Activated CD4-positive, alpha-beta T cell treated with anti-CD3 and anti-CD28 coated beads for 36 hours (primary cell): ENCODE measurements at regions of chr9 and their contacts with region 1.

Region 1: GRCh38 chr9:99266255-99267023 is 44.4 kb downstream of the SEC61B start:
- DNase-seq: peak; percentile 83
- ATAC-seq: peak; percentile 85
- H3K4me3 Mint-ChIP-seq: peak overlapping the region; percentile 48
- H3K27ac Mint-ChIP-seq: peak overlapping the region; percentile 65
- H3K4me1 Mint-ChIP-seq: peaks cover 23% of the 10 kb centered on the region
- H3K27me3 Mint-ChIP-seq: peaks cover 5% of the 10 kb centered on the region

Region 2: GRCh38 chr9:97359147-97359546 is 1907.3 kb before region 1 on chr9:
- CTCF ChIA-PET with region 1: no interaction called
- POLR2A ChIA-PET with region 1: no interaction called
- intact Hi-C with region 1: no loop called
- DNase-seq: no peak
- ATAC-seq: no peak
- H3K4me3 Mint-ChIP-seq: no peak overlapping the region
- H3K27ac Mint-ChIP-seq: no peak overlapping the region
- H3K4me1 Mint-ChIP-seq: peaks cover 3% of the 10 kb centered on the region
- H3K27me3 Mint-ChIP-seq: no peaks in the 10 kb centered on the region

Region 3: DNA sequence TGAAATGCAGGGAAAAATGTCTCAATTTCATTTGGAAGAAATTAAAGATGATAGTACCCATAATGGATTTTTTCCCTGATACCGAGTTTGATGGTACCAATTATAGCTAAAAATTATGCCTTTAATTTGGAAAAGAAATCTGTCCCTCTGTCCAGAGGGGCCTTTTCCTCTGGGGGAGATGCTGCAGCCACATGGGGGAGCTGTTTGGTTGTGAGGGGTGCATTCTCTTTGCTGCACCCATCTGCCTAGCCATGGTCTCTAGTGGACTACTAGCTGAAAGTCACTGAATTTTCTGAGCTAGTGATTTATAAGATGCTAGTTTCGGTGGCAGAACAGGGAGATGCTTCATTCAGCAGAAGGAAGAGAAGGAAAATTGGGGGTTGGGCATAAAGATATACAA is 34.7 kb before region 1 on chr9:
- CTCF ChIA-PET with region 1: interaction called, 10 read pairs
- POLR2A ChIA-PET with region 1: no interaction called
- intact Hi-C with region 1: no loop called
- DNase-seq: peak; percentile 73
- ATAC-seq: no peak
- H3K4me3 Mint-ChIP-seq: no peak overlapping the region
- H3K27ac Mint-ChIP-seq: no peak overlapping the region
- H3K4me1 Mint-ChIP-seq: peaks cover 18% of the 10 kb centered on the region
- H3K27me3 Mint-ChIP-seq: no peaks in the 10 kb centered on the region

Region 4: DNA sequence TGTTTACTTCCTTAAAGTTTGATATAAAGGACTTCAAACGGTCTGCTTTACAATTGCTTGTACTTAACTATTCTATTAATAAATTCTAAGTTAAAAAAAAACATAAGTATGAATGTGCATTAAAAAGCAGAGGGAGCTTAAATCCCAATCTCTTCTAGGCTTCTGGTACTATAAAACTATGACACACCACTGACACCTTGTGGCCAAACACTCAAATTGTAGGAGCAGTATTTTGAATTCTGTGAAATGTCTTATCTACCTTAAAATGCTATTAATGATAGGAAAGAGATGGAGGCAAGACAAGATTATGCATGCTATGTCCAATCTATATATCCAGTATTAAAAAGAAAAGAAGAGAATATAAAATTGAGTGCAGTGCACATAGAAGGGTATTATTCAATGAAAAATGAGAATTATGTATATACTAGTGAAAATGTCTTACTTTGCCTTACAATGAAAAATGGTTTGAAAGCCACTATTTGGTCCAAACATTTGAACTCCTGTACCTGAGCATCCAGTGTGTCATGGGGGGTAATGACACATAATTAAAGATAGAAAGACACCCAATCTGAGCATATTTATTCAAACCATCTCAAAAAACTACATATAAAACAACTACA is 744.7 kb after region 1 on chr9:
- CTCF ChIA-PET with region 1: no interaction called
- POLR2A ChIA-PET with region 1: no interaction called
- intact Hi-C with region 1: loop called (anchors 1 to 2 kb)
- DNase-seq: peak; percentile 64
- ATAC-seq: peak; percentile 53
- H3K4me3 Mint-ChIP-seq: no peak overlapping the region
- H3K27ac Mint-ChIP-seq: no peak overlapping the region
- H3K4me1 Mint-ChIP-seq: no peaks in the 10 kb centered on the region
- H3K27me3 Mint-ChIP-seq: no peaks in the 10 kb centered on the region